Natural killer cell (primary cell): ENCODE measurements at regions of chr10 and their contacts with region 1.

Region 1: DNA sequence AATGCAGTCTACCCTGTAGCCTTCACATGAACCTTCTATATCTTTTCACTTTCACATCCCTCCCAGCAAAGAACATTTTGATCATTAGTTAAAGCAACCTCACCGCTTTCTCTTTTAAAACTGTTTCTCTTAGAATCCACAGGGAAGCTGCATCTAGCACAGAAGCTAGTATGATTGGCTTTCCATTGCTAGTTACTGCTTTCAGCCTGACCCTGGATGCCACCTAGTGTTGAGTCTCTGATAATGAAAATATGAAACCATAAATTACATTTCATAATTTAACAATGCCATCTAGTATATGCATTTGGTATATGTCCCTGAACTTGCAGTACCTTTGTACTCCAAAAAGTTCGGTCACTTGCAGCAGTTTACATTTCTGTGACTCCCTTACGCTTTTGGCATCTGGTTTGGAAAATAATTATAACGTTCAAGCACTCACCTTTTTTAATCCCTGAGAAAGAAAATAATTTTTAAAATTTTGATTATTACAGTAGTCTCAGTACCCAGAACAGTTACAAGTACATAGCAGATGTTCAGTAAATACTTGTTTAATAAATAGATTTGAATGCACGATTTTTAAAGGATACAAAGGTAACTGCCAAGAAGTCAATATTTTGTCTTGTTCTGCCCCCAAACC is 22.7 kb downstream of the CISD1 start:
- DNase-seq: peak in 1 of 2 donors; percentile 71
- ATAC-seq: peak; percentile 64 to 78 (median 70)
- H3K4me3 ChIP-seq: no peak overlapping the region
- H3K4me3 Mint-ChIP-seq: no peak overlapping the region
- H3K27ac ChIP-seq: no peak overlapping the region
- H3K27ac Mint-ChIP-seq: no peak overlapping the region
- H3K4me1 ChIP-seq: no peaks in the 10 kb centered on the region
- H3K4me1 Mint-ChIP-seq: peaks cover 0 to 5% of the 10 kb centered on the region in 2 donors
- H3K27me3 ChIP-seq: no peaks in the 10 kb centered on the region
- H3K27me3 Mint-ChIP-seq: no peaks in the 10 kb centered on the region
- CTCF ChIP-seq: peak; percentile 76

Region 2: DNA sequence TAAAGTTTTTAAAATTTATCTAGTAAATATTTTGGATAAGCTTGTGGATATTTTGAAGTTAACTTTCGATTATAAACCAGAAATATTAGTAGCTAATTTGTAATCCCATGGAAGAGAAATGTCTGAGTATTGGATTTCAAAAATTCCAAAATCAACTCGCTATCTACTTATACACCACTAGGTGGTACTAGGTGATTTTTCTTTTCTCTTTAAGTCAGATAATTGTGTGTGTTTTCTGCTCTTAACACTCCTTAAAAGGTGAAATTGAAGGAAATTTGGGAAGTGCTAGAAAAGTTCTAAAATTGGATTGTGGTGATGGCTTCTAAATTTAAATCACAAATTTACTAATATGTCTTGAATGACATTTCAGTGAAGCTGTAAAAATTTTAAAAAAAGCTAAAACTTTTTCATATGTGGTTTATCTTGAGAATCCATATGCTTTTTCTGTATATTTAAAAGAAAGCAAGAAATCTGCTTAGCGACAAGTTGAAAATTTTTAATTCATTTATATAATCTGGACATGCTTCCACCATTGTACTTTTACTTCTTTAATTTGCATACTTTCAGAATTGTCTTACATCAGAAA is 114.2 kb before region 1 on chr10:
- intact Hi-C with region 1: loop called (anchors 1 kb)
- DNase-seq: peak in 1 of 2 donors; percentile 49
- ATAC-seq: no peak
- H3K4me3 ChIP-seq: no peak overlapping the region
- H3K4me3 Mint-ChIP-seq: no peak overlapping the region
- H3K27ac ChIP-seq: no peak overlapping the region
- H3K27ac Mint-ChIP-seq: no peak overlapping the region
- H3K4me1 ChIP-seq: no peaks in the 10 kb centered on the region
- H3K4me1 Mint-ChIP-seq: no peaks in the 10 kb centered on the region
- H3K27me3 ChIP-seq: no peaks in the 10 kb centered on the region
- H3K27me3 Mint-ChIP-seq: peaks cover 0 to 10% of the 10 kb centered on the region in 2 donors
- CTCF ChIP-seq: peak; percentile 66